Psoas muscle (tissue), 8 donors: ENCODE measurements at regions of chr14 and their contacts with region 1.

Region 1: GRCh38 chr14:75293920-75294642 is 15.5 kb downstream of the FOS start:
- DNase-seq: peak; percentile 96 to 98
- ATAC-seq: peak; percentile 92 to 97 (median 95)
- H3K4me3 ChIP-seq: peak overlapping the region; percentile 85
- H3K27ac ChIP-seq: peak overlapping the region; percentile 95
- H3K4me1 ChIP-seq: peaks cover 10% of the 10 kb centered on the region
- H3K27me3 ChIP-seq: no peaks in the 10 kb centered on the region
- CTCF ChIP-seq: no peak

Region 2: DNA sequence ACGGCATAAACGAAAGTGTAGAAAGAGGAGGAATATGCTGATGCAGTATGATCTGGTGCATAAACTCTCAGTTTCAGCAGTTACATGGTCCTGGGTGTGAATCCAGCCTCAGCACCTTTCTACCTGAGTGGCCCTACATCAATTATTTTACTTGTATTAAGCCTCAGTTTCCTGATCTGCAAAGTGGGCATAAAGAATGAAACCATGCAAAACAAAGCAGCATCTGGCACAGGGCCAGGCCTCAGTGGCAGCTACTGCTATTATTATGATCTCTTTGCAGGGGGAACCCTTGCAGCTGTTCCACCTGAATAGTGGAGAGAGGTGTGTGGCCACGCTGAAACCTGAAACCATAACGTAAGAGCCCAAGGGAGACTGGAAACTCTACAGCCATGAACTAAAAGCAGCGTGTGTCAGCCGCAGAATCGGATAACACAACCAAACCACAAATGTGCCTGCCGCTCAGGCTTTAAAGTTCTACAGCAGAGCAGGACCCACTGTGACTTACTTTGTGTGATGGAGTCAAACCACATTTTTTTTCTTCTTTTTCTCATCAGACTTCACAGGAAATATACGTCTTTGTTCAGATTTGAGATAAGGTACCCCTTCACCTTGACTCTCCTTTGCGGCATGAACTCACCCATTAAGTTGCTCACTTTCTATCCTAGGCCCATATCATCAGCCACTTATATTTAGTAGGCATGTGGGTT is 44.7 kb before region 1 on chr14:
- intact Hi-C with region 1: loop called in 1 of 2 experiments (anchors 10 kb)
- DNase-seq: peak; percentile 55 to 68
- ATAC-seq: peak; percentile 84 to 91 (median 86)
- H3K4me3 ChIP-seq: no peak overlapping the region
- H3K27ac ChIP-seq: peak overlapping the region; percentile 95
- H3K4me1 ChIP-seq: peaks cover 35% of the 10 kb centered on the region
- H3K27me3 ChIP-seq: no peaks in the 10 kb centered on the region
- CTCF ChIP-seq: no peak

Region 3: GRCh38 chr14:75333606-75334548 is 39.8 kb after region 1 on chr14:
- intact Hi-C with region 1: no loop called
- DNase-seq: peak; percentile 65
- ATAC-seq: peak in 3 of 4 donors; percentile 14 to 38 (median 32)
- H3K4me3 ChIP-seq: no peak overlapping the region
- H3K27ac ChIP-seq: peak overlapping the region; percentile 44
- H3K4me1 ChIP-seq: peaks cover 15% of the 10 kb centered on the region
- H3K27me3 ChIP-seq: no peaks in the 10 kb centered on the region
- CTCF ChIP-seq: no peak